Esophagus squamous epithelium (tissue), 5 donors: ENCODE measurements at regions of chr13 and their contacts with region 1.

Region 1: DNA sequence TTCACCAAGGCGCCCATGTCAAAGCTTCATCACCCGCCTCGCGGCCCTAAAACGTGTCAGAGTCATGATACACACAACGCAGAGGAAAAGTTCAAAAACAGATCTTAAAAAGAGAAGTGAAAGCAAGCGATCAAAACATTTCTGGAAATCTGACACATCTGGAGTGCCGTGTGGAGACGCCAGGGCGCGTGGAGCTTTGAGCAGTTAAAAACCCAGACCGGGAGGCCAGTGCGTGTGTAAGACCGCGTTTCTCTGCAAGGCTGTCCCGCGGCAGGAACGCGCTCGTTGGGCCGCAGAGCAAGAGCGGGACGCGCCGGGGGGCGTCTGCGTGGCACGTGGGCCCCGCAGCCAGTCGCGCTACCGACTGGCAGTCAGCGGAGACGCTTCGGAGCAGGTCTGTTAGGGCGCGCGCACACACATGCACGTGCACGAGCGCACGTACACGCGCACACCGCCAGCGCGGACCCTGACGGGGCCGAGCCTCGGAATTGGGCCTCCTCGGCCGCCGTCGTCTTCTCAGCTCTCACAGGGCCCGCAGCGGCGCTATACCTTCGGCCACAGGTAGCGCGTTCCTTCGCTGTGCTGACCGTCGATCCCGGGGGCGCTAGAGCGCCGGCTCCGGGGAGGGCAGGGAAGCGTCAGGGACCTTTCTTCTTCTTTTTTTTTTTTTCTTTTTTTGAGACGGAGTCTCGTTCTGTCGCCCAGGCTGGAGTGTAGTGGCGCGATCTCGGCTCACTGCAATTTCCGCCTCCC is 35.8 kb downstream of the RNF6 start:
- DNase-seq: peak; percentile 59
- H3K4me3 ChIP-seq: peak overlapping the region; percentile 44 to 75 (median 63)
- H3K27ac ChIP-seq: peak overlapping the region; percentile 54 to 82 (median 80)
- H3K4me1 ChIP-seq: peaks cover 6 to 15% (median 6%) of the 10 kb centered on the region in 3 donors
- H3K27me3 ChIP-seq: no peaks in the 10 kb centered on the region
- CTCF ChIP-seq: peak in 5 of 6 experiments; percentile 19 to 70 (median 41)
- POLR2A ChIP-seq: peak in 2 of 4 donors; percentile 17 to 44

Region 2: GRCh38 chr13:25692099-25692498 is 494.2 kb before region 1 on chr13:
- intact Hi-C with region 1: no loop called
- DNase-seq: no peak
- H3K4me3 ChIP-seq: no peak overlapping the region
- H3K27ac ChIP-seq: no peak overlapping the region
- H3K4me1 ChIP-seq: no peaks in the 10 kb centered on the region
- H3K27me3 ChIP-seq: no peaks in the 10 kb centered on the region
- CTCF ChIP-seq: no peak
- POLR2A ChIP-seq: no peak

Region 3: GRCh38 chr13:26051657-26052311 is 134.5 kb before region 1 on chr13 and contains the start of gene SHISA2:
- intact Hi-C with region 1: no loop called
- DNase-seq: no peak
- H3K4me3 ChIP-seq: peak within 1 kb of the TSS; percentile 22 to 66 (median 41)
- H3K27ac ChIP-seq: peak within 1 kb of the TSS in 1 of 4 donors; percentile 36
- H3K4me1 ChIP-seq: peaks cover 5 to 34% (median 11%) of the 10 kb centered on the region in 3 donors
- H3K27me3 ChIP-seq: peaks cover 12 to 86% (median 16%) of the 10 kb centered on the region in 4 donors
- CTCF ChIP-seq: no peak
- POLR2A ChIP-seq: peak in 2 of 4 donors; percentile 24 to 26
- total RNA-seq, gene SHISA2: 0.23 to 0.38 TPM in 2 of 4 donors, not detected in the others

Region 4: GRCh38 chr13:26498656-26499591 is 312.6 kb after region 1 on chr13:
- intact Hi-C with region 1: loop called (anchors 5 kb)
- DNase-seq: no peak
- H3K4me3 ChIP-seq: no peak overlapping the region
- H3K27ac ChIP-seq: peak overlapping the region in 2 of 4 donors; percentile 5 to 31
- H3K4me1 ChIP-seq: peaks cover 0 to 23% (median 0%) of the 10 kb centered on the region in 3 donors
- H3K27me3 ChIP-seq: peaks cover 0 to 4% (median 0%) of the 10 kb centered on the region in 4 donors
- CTCF ChIP-seq: peak in 1 of 6 experiments; percentile 27
- POLR2A ChIP-seq: no peak

Region 5: DNA sequence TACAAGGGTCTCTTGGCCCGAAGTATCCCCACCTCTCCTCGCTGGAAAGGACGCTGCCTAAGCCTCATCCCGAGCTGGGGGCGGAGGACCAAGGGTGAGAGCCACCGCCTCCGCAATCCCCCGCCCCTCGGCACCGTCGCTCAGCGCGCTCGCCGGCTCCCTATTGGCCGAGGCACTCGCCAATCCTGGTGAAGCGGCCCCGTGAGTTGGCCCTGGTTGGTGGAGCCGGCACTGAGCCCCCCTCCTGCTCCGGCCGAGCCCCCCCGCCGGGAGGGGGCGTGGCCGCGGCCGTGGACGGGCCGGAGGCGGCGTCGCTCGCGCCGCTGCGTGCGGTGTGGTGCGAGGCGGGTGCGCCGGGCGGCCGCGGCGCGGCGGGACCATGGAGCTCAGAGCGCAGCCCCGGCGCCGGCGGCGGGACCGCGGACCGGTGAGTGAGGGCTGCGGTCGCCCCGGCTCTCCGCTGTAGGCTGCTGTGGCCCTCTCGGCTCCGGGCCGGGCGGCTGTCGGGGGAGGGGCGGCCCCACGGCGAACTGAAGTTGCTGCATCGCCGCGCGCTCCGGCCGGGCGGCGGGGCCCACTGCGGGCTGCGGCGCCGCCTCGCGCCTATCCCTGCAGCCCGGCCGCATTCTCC is 371.2 kb after region 1 on chr13 and contains the start of gene WASF3:
- intact Hi-C with region 1: loop called (anchors 5 kb)
- DNase-seq: no peak
- H3K4me3 ChIP-seq: peak within 1 kb of the TSS; percentile 57 to 86 (median 76)
- H3K27ac ChIP-seq: peak within 1 kb of the TSS; percentile 19 to 85 (median 71)
- H3K4me1 ChIP-seq: peaks cover 2 to 27% (median 7%) of the 10 kb centered on the region in 3 donors
- H3K27me3 ChIP-seq: peaks cover 0 to 23% (median 0%) of the 10 kb centered on the region in 4 donors
- CTCF ChIP-seq: no peak
- POLR2A ChIP-seq: peak in 1 of 4 donors; percentile 28
- total RNA-seq, gene WASF3: 1.4 to 13.9 (median 2.8) TPM